ENCODE measurements at regions of chr3 and their contacts with region 1.

Region 1: GRCh38 chr3:178140531-178141304 is 395.5 kb upstream of the KCNMB2 start:
- DNase-seq: no peak
- ATAC-seq: no peak
- H3K4me3 ChIP-seq: no peak overlapping the region
- H3K4me3 Mint-ChIP-seq: no peak overlapping the region
- H3K27ac ChIP-seq: no peak overlapping the region
- H3K27ac Mint-ChIP-seq: no peak overlapping the region
- H3K4me1 ChIP-seq: no peaks in the 10 kb centered on the region
- H3K4me1 Mint-ChIP-seq: peaks cover 1% of the 10 kb centered on the region
- H3K27me3 ChIP-seq: no peaks in the 10 kb centered on the region
- H3K27me3 Mint-ChIP-seq: no peaks in the 10 kb centered on the region
- CTCF ChIP-seq: no peak

Region 2: GRCh38 chr3:178097576-178097975 is 43.1 kb before region 1 on chr3:
- CTCF ChIA-PET with region 1: no interaction called
- POLR2A ChIA-PET with region 1: no interaction called
- intact Hi-C with region 1: loop called in 1 of 2 experiments (anchors 5 kb)
- DNase-seq: no peak
- ATAC-seq: no peak
- H3K4me3 ChIP-seq: no peak overlapping the region
- H3K4me3 Mint-ChIP-seq: no peak overlapping the region
- H3K27ac ChIP-seq: no peak overlapping the region
- H3K27ac Mint-ChIP-seq: no peak overlapping the region
- H3K4me1 ChIP-seq: no peaks in the 10 kb centered on the region
- H3K4me1 Mint-ChIP-seq: no peaks in the 10 kb centered on the region
- H3K27me3 ChIP-seq: no peaks in the 10 kb centered on the region
- H3K27me3 Mint-ChIP-seq: no peaks in the 10 kb centered on the region
- CTCF ChIP-seq: no peak

Region 3: DNA sequence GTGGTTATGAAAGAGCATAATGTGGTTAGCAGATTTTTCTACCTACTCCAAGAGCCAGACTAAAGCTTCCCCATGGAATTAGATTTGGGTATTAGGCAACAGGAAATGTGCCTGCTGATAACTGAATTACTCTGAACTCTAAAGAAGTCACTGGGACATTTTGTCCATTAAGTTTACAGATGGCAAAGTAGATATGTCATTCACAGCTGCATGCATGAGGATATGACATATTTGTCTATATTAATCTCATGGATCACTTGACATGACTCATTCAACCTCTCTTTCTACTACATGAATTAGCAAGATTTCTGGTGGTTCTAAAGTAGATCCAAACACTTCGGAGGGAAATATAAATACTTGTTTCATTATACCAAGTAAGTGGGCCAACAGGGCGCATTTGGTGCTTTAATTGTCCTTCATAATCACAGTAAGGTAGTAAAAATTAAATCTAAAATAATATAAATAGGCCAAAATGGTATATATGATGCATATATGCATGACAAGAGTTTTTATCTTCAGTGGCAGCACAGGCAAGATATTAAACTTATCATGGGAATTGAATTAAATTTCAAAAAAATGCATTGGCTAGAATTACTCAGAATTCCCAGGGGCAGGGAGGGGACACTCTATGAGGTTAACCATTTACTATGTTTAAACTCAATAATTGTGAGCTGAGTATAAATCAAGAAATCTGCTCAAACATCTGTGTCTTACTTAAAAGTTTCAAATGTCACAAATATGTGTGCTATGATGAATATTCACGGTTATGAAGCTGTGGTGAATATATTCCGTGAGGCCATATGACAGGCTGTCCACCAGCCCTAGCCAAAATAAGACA is 30.2 kb after region 1 on chr3:
- CTCF ChIA-PET with region 1: no interaction called
- POLR2A ChIA-PET with region 1: no interaction called
- intact Hi-C with region 1: no loop called
- DNase-seq: no peak
- ATAC-seq: no peak
- H3K4me3 ChIP-seq: no peak overlapping the region
- H3K4me3 Mint-ChIP-seq: no peak overlapping the region
- H3K27ac ChIP-seq: no peak overlapping the region
- H3K27ac Mint-ChIP-seq: no peak overlapping the region
- H3K4me1 ChIP-seq: no peaks in the 10 kb centered on the region
- H3K4me1 Mint-ChIP-seq: no peaks in the 10 kb centered on the region
- H3K27me3 ChIP-seq: no peaks in the 10 kb centered on the region
- H3K27me3 Mint-ChIP-seq: no peaks in the 10 kb centered on the region
- CTCF ChIP-seq: no peak

Measured in CD4-positive, alpha-beta T cell (primary cell).